ENCODE measurements at regions of chr11 and their contacts with region 1.

Region 1: GRCh38 chr11:355581-356458 is 13.5 kb upstream of the B4GALNT4 start:
- DNase-seq: peak; percentile 92
- ATAC-seq: peak; percentile 91 to 92
- H3K4me3 ChIP-seq: peak overlapping the region; percentile 51
- H3K27ac ChIP-seq: peak overlapping the region; percentile 96
- H3K4me1 ChIP-seq: peaks cover 32% of the 10 kb centered on the region
- H3K27me3 ChIP-seq: no peaks in the 10 kb centered on the region
- CTCF ChIP-seq: no peak

Region 2: GRCh38 chr11:304915-305843 is 50.6 kb before region 1 on chr11:
- intact Hi-C with region 1: loop called (anchors 10 kb)
- DNase-seq: peak; percentile 70
- ATAC-seq: no peak
- H3K4me3 ChIP-seq: no peak overlapping the region
- H3K27ac ChIP-seq: peak overlapping the region; percentile 88
- H3K4me1 ChIP-seq: peaks cover 36% of the 10 kb centered on the region
- H3K27me3 ChIP-seq: peaks cover 12% of the 10 kb centered on the region
- CTCF ChIP-seq: peak; percentile 73

Region 3: GRCh38 chr11:695538-696248 is 339.9 kb after region 1 on chr11 and contains the start of gene TMEM80:
- intact Hi-C with region 1: no loop called
- DNase-seq: peak; percentile 99
- ATAC-seq: peak; percentile 93 to 94
- H3K4me3 ChIP-seq: peak within 1 kb of the TSS; percentile 81
- H3K27ac ChIP-seq: peak within 1 kb of the TSS; percentile 100
- H3K4me1 ChIP-seq: peaks cover 38% of the 10 kb centered on the region
- H3K27me3 ChIP-seq: no peaks in the 10 kb centered on the region
- CTCF ChIP-seq: no peak
- total RNA-seq, gene TMEM80: 33.9 TPM

Measured in lower lobe of right lung (tissue), 2 donors.